ENCODE measurements at regions of chr10 and their contacts with region 1.

Region 1: GRCh38 chr10:102009801-102010425 is 46.1 kb downstream of the ARMH3 start:
- DNase-seq: peak; percentile 86 to 88
- ATAC-seq: peak; percentile 98 to 99
- H3K4me3 ChIP-seq: no peak overlapping the region
- H3K27ac ChIP-seq: peak overlapping the region in 1 of 2 experiments; percentile 36; a peak in 2 of 6 replicates
- H3K4me1 ChIP-seq: peaks cover 6% of the 10 kb centered on the region
- CTCF ChIP-seq: peak; percentile 98
- EP300 ChIP-seq: no peak
- POLR2A ChIP-seq: no peak
- RAD21 ChIP-seq: peak; percentile 97 to 99

Region 2: GRCh38 chr10:101018600-101019439 is 991.1 kb before region 1 on chr10:
- CTCF ChIA-PET with region 1: no interaction called
- POLR2A ChIA-PET with region 1: no interaction called
- DNase-seq: peak; percentile 82 to 95
- ATAC-seq: peak; percentile 80 to 93
- H3K4me3 ChIP-seq: no peak overlapping the region
- H3K27ac ChIP-seq: peak overlapping the region; percentile 35 to 76; a peak in 4 of 6 replicates
- H3K4me1 ChIP-seq: peaks cover 14% of the 10 kb centered on the region
- CTCF ChIP-seq: peak; percentile 78
- EP300 ChIP-seq: no peak
- POLR2A ChIP-seq: no peak
- RAD21 ChIP-seq: peak; percentile 75 to 78

Region 3: GRCh38 chr10:101782811-101783735 is 226.8 kb before region 1 on chr10 and contains the start of gene NPM3:
- CTCF ChIA-PET with region 1: interaction called, 19 read pairs
- POLR2A ChIA-PET with region 1: no interaction called
- DNase-seq: peak; percentile 81 to 94
- ATAC-seq: peak; percentile 64 to 81
- H3K4me3 ChIP-seq: peak within 1 kb of the TSS; percentile 72
- H3K27ac ChIP-seq: peak within 1 kb of the TSS; percentile 84 to 93
- H3K4me1 ChIP-seq: peaks cover 32% of the 10 kb centered on the region
- CTCF ChIP-seq: no peak
- EP300 ChIP-seq: no peak
- POLR2A ChIP-seq: peak; percentile 51
- RAD21 ChIP-seq: no peak
- polyA plus RNA-seq, gene NPM3: 41.5 and 45.0 TPM in 2 replicates

Region 4: GRCh38 chr10:101858723-101859500 is 151.0 kb before region 1 on chr10:
- CTCF ChIA-PET with region 1: interaction called, 379 read pairs
- POLR2A ChIA-PET with region 1: no interaction called
- DNase-seq: no peak
- ATAC-seq: no peak
- H3K4me3 ChIP-seq: no peak overlapping the region
- H3K27ac ChIP-seq: no peak overlapping the region
- H3K4me1 ChIP-seq: peaks cover 10% of the 10 kb centered on the region; the same call in 2 of the 3 replicates
- CTCF ChIP-seq: no peak
- EP300 ChIP-seq: no peak
- POLR2A ChIP-seq: no peak
- RAD21 ChIP-seq: no peak

Region 5: GRCh38 chr10:101903827-101904550 is 105.9 kb before region 1 on chr10:
- CTCF ChIA-PET with region 1: interaction called, 14 read pairs
- POLR2A ChIA-PET with region 1: no interaction called
- DNase-seq: no peak
- ATAC-seq: no peak
- H3K4me3 ChIP-seq: no peak overlapping the region
- H3K27ac ChIP-seq: no peak overlapping the region
- H3K4me1 ChIP-seq: no peaks in the 10 kb centered on the region
- CTCF ChIP-seq: no peak
- EP300 ChIP-seq: no peak
- POLR2A ChIP-seq: no peak
- RAD21 ChIP-seq: no peak

Region 6: DNA sequence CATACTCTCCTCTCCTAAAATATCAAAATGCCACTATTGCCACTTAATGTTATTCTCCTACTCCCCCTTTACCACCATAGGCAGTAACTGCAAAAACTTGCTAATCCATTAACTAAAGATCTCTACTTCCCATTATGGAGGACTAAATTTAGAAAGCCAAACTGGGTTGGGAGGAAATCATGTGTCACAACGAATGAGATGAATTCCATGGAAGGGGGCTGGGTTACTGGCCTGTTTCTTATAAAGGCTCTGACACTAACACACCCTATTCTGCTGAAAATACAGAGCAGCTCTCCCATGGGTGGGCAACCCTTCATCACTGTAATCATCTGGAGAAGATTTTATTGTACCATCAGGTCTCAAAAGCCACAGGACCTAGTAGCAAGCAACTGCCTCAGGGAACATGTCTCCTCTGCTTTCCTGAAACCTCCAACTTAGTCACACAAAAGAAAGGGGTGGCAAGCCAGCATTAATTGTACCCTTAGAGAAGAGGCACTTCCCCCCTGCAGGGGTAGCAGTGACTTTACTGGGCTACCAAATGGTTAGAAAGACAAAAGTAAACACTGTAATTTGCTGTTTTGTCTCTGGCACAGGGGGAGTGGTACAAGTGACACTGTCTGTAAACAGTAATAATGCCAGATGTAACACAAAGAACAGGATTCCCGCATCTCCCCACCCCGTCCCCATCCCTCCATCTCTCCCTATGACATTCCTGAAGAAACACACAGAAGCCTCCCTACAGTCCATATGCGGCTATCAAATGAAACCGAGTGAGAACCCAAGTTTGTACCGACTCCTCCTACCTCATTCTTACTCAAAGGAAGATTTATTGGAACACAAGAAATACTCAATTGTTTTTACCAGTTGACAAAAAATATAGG is 35.6 kb before region 1 on chr10:
- CTCF ChIA-PET with region 1: interaction called, 19 read pairs
- POLR2A ChIA-PET with region 1: no interaction called
- DNase-seq: no peak
- ATAC-seq: no peak
- H3K4me3 ChIP-seq: no peak overlapping the region
- H3K27ac ChIP-seq: no peak overlapping the region
- H3K4me1 ChIP-seq: peaks cover 19% of the 10 kb centered on the region
- CTCF ChIP-seq: no peak
- EP300 ChIP-seq: no peak
- POLR2A ChIP-seq: no peak
- RAD21 ChIP-seq: no peak

Region 7: DNA sequence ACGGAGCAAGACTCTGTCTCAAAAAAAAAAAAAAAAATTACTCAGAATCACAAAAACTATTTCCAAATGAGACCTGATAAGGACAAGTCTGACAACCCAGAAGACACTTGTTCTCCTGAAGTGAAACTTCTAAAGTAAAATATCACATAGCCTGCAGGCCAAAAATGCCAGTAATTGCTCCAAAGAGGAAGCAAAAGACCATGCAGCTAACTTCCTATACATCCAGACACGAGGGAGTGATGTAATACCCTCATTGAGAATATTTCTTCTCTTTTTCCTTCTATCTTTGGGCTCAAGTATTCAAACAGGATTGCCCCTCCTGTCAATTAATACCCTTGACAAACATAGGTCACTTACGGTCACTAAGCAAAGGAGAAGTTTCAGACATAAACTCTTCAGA is 14.9 kb after region 1 on chr10:
- CTCF ChIA-PET with region 1: interaction called, 51 read pairs
- POLR2A ChIA-PET with region 1: interaction called, 3 read pairs
- DNase-seq: no peak
- ATAC-seq: no peak
- H3K4me3 ChIP-seq: no peak overlapping the region
- H3K27ac ChIP-seq: no peak overlapping the region
- H3K4me1 ChIP-seq: no peaks in the 10 kb centered on the region
- CTCF ChIP-seq: no peak
- EP300 ChIP-seq: no peak
- POLR2A ChIP-seq: no peak
- RAD21 ChIP-seq: no peak

Region 8: GRCh38 chr10:102065561-102066398 is 55.9 kb after region 1 on chr10:
- CTCF ChIA-PET with region 1: interaction called, 10 read pairs
- POLR2A ChIA-PET with region 1: no interaction called
- DNase-seq: peak; percentile 38 to 48
- ATAC-seq: peak; percentile 51 to 65
- H3K4me3 ChIP-seq: peak overlapping the region; percentile 87
- H3K27ac ChIP-seq: peak overlapping the region; percentile 91 to 99
- H3K4me1 ChIP-seq: peaks cover 20% of the 10 kb centered on the region
- CTCF ChIP-seq: no peak; the same call in 2 of the 3 replicates
- EP300 ChIP-seq: no peak
- POLR2A ChIP-seq: no peak; the same call in 1 of the 2 replicates
- RAD21 ChIP-seq: no peak

Region 9: GRCh38 chr10:102342958-102343357 is 333.0 kb after region 1 on chr10:
- CTCF ChIA-PET with region 1: no interaction called
- POLR2A ChIA-PET with region 1: no interaction called
- DNase-seq: no peak
- ATAC-seq: no peak
- H3K4me3 ChIP-seq: no peak overlapping the region
- H3K27ac ChIP-seq: no peak overlapping the region
- H3K4me1 ChIP-seq: peaks cover 4% of the 10 kb centered on the region; the same call in 1 of the 3 replicates
- CTCF ChIP-seq: no peak
- EP300 ChIP-seq: no peak
- POLR2A ChIP-seq: no peak
- RAD21 ChIP-seq: no peak